K562 (cell line): ENCODE measurements at regions of chr4 and their contacts with region 1.

Region 1: DNA sequence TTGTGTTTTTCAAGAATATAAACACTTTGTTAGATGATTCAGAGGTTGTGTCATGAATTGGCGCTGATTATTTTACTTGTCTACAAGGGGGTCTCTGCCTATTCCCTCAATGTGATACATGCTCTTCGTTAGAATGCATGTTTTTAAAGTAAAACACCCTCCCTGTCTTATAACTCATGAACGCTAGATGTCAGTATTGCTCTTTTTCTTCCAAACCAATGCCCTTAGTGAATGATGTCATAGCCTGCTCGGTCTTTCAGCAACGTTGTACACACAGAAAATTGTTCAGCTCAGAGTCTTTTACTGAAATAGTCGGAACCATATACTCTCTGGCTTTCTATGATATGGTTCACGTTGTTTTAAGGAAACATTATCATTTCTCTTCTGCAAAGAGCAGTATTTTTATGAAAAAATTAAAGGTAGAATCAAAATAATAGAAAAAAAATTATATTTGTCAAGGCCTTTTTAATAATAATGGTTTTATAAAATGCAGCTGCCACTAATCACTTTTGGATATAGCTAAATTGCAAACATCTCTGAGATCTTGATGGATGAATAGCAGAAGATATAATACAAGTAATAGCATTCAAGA is 292.9 kb downstream of the TLL1 start:
- DNase-seq: peak; percentile 34 to 65 (median 39)
- ATAC-seq: peak; percentile 86
- H3K4me3 ChIP-seq: no peak overlapping the region
- H3K27ac ChIP-seq: no peak overlapping the region
- H3K4me1 ChIP-seq: no peaks in the 10 kb centered on the region
- H3K27me3 ChIP-seq: no peaks in the 10 kb centered on the region
- CTCF ChIP-seq: peak; percentile 33 to 73 (median 60); a peak in 5 of 6 replicates
- EP300 ChIP-seq: no peak
- POLR2A ChIP-seq: no peak
- RAD21 ChIP-seq: peak; percentile 69 to 77

Region 2: DNA sequence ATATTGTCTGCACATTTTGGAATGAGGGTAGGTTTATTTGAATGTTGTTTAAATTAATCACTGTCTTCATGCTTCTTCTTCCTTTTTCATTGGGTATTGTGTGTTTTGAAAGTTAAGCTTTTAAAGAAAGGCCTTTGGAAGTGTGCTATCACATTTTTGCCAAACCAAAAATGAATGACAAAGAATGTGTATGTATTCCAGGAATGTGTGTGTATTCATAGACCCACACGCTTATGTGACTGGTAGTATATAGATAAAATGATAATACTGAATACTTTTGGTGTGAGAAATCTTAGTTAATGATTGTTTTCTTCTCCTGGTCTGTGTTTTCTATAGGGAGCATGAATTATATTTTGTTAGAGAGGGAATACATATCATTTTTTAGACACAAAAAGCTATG is 111.5 kb after region 1 on chr4:
- CTCF ChIA-PET with region 1: no interaction called
- POLR2A ChIA-PET with region 1: no interaction called
- in situ Hi-C with region 1: no loop called
- intact Hi-C with region 1: no loop called
- DNase-seq: no peak
- ATAC-seq: no peak
- H3K4me3 ChIP-seq: no peak overlapping the region
- H3K27ac ChIP-seq: no peak overlapping the region
- H3K4me1 ChIP-seq: no peaks in the 10 kb centered on the region
- H3K27me3 ChIP-seq: no peaks in the 10 kb centered on the region
- CTCF ChIP-seq: no peak
- EP300 ChIP-seq: no peak
- POLR2A ChIP-seq: no peak
- RAD21 ChIP-seq: no peak

Region 3: DNA sequence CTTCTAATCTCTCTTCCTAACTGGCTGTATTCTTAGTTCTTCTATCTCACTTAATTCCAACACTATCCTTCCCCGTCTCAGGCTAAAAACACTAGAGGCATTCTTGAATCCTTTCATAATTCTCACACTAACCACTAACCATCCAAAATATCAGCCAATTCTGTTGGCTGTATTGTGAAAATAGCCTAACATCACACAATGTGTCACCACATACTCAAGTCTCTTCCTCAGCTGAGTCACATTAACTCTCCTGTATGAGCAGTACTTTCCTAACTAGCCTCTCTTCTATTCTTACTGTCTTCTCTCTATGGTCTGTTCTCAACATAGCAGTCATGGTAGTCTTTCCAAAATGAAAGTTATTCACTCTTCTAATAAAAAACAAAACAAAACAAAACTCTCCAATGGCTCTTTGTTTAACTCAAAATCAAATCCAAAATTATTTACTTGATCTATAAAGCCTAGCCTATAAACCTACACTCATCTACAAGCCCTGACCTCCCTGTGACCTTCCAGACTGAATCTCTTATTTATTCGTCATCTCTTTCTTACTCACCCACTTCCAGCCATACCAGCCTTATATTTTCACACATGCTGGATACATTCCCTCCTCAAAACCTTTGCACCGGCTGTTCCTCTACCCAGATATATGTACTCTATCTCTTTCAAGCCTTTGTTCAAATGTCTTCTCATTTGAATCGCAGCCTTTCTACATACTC is 153.0 kb after region 1 on chr4:
- CTCF ChIA-PET with region 1: no interaction called
- POLR2A ChIA-PET with region 1: no interaction called
- in situ Hi-C with region 1: no loop called
- intact Hi-C with region 1: no loop called
- DNase-seq: no peak
- ATAC-seq: no peak
- H3K4me3 ChIP-seq: no peak overlapping the region
- H3K27ac ChIP-seq: no peak overlapping the region
- H3K4me1 ChIP-seq: no peaks in the 10 kb centered on the region
- H3K27me3 ChIP-seq: no peaks in the 10 kb centered on the region
- CTCF ChIP-seq: no peak
- EP300 ChIP-seq: no peak
- POLR2A ChIP-seq: no peak
- RAD21 ChIP-seq: no peak

Region 4: GRCh38 chr4:167622481-167623246 is 1456.7 kb after region 1 on chr4:
- CTCF ChIA-PET with region 1: no interaction called
- POLR2A ChIA-PET with region 1: no interaction called
- in situ Hi-C with region 1: no loop called
- intact Hi-C with region 1: loop called (anchors 5 kb)
- DNase-seq: peak; percentile 17 to 50 (median 29)
- ATAC-seq: 0 out of 3 replicates have a peak, but pooled peaks have one; percentile 45
- H3K4me3 ChIP-seq: no peak overlapping the region
- H3K27ac ChIP-seq: no peak overlapping the region
- H3K4me1 ChIP-seq: no peaks in the 10 kb centered on the region
- H3K27me3 ChIP-seq: no peaks in the 10 kb centered on the region
- CTCF ChIP-seq: peak; percentile 36 to 58 (median 41)
- EP300 ChIP-seq: no peak
- POLR2A ChIP-seq: no peak
- RAD21 ChIP-seq: peak in 1 of 2 experiments; percentile 15; a peak in 2 of 4 replicates